ENCODE measurements at regions of chr14 and their contacts with region 1.

Region 1: DNA sequence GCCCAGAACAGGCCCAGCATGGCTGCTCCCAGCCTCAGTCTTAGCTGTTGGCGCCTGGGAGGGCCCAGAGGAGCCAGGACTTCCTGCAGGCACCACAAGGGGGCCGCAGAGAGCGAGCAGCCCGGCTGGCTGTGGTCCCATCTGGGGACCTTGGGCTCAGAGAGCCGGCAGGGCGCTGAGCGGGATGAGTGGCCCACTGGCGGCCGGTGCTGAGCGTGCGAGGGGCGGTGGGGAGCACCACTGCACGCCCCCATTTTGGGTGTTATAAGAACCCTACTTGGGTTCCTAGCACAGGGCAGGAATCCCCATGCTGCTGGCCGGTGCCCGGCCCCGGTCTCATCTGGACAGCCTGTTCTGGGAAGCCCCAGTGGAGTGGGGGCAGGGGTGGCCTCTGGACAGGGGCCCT is 25.9 kb upstream of the CRIP2 start:
- DNase-seq: peak; percentile 20
- ATAC-seq: peak; percentile 83
- H3K4me3 ChIP-seq: no peak overlapping the region
- H3K27ac ChIP-seq: no peak overlapping the region
- H3K4me1 ChIP-seq: peaks cover 14% of the 10 kb centered on the region
- H3K27me3 ChIP-seq: no peaks in the 10 kb centered on the region
- CTCF ChIP-seq: peak; percentile 85
- EP300 ChIP-seq: no peak
- POLR2A ChIP-seq: no peak
- RAD21 ChIP-seq: peak; percentile 81

Region 2: DNA sequence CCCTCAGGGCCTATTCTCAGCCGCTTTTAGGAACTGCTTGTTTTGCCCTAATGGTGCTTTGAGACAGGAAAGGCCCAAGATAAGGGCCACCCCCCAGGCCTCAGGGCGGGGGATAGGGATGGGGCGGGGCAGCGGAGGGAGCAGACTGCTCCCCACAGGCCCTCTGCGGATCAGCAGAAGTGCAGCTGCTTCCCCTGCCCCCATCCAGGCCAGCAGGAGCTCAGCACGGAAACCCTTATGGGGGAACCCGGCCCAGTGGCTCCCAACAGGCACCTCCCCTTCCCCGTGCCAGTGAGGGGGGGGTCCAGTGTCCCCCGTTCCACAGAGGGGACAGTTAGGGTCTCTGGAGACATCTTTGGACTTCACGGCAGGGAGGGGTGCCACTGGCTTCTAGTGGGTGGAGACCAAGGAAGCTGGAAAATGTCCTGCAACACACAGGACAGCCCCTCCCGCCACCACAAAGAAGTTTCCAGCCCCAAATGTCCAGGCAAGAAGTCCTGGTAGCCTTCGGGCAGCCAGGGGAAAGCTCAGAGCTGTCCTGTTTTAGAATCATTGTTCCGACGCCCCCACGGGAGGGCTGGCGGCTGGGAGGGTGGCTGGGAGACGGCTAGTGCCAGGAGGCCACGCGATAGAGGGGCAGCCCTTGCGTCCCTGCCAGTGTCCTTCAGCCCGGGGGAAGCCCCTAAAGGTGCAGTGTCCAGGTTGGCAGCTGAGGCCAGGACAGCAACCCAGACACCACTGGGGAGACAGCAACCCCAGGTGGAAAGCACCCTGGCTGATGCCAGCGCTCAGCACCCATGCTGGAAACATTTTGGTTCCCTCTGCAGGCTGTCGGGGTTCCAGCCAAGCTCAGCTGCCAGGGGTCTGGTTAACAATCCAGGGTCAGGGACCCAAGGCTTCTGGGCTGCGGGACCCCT is 373.1 kb before region 1 on chr14:
- CTCF ChIA-PET with region 1: no interaction called
- POLR2A ChIA-PET with region 1: no interaction called
- in situ Hi-C with region 1: no loop called
- intact Hi-C with region 1: no loop called
- DNase-seq: no peak
- ATAC-seq: no peak
- H3K4me3 ChIP-seq: no peak overlapping the region
- H3K27ac ChIP-seq: no peak overlapping the region
- H3K4me1 ChIP-seq: no peaks in the 10 kb centered on the region
- H3K27me3 ChIP-seq: peaks cover 10 to 63% of the 10 kb centered on the region in 2 experiments; a peak in 4 of 5 replicates
- CTCF ChIP-seq: no peak
- EP300 ChIP-seq: no peak
- POLR2A ChIP-seq: no peak
- RAD21 ChIP-seq: no peak

Region 3: DNA sequence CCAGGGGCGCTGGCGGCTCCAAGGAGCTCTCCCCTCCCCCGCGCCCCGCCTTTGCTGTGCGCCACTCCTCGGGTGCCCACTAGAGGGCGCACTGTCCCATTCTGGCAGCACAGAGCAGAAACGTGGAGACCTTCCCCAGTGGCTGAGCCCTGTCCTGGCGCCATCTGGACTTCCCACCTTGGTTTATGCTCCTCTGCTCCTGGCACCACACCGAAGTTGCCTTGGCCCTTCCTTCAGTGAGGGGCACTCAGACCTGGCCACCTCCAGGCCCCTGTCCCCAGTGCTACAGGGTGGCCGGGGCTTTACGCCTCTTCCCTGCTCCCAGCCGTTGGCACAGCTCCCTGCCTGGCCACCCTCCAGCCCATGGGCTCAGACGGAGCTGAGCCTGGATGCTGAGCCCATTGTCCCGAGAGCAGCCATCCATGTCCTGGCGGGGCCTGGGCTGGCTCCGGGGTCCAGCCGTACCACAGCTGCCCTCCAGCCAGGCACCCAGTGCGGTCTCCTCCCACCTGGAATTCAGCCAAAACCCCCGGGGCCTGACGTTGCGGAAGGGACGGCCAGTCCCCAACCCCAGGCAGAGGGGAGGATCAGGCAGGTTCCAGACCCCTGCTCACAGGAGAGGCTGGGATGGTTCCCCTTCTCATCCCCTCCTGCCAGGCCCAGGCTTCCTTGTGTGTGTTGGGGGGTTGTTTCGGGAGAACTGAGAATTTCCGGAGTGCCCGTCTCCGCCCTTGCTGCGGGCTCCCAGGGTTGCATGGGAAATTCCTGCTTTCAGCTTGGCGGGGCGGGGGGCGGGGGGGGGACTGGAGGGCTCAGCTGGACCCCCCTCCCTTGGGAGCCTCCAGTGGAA is 32.5 kb after region 1 on chr14:
- CTCF ChIA-PET with region 1: interaction called, 13 read pairs
- POLR2A ChIA-PET with region 1: no interaction called
- in situ Hi-C with region 1: no loop called
- intact Hi-C with region 1: no loop called
- DNase-seq: peak; percentile 67
- ATAC-seq: peak; percentile 38
- H3K4me3 ChIP-seq: peak overlapping the region; percentile 53 to 82 (median 61)
- H3K27ac ChIP-seq: peak overlapping the region; percentile 83
- H3K4me1 ChIP-seq: peaks cover 67% of the 10 kb centered on the region
- H3K27me3 ChIP-seq: peaks cover 2 to 32% of the 10 kb centered on the region in 2 experiments; a peak in 4 of 5 replicates
- CTCF ChIP-seq: peak; percentile 99
- EP300 ChIP-seq: no peak
- POLR2A ChIP-seq: peak in 1 of 2 experiments; percentile 66; a peak in 2 of 4 replicates
- RAD21 ChIP-seq: peak; percentile 84

Measured in HepG2 (cell line).